AG04449 (cell line): ENCODE measurements at regions of chr3 and their contacts with region 1.

Region 1: DNA sequence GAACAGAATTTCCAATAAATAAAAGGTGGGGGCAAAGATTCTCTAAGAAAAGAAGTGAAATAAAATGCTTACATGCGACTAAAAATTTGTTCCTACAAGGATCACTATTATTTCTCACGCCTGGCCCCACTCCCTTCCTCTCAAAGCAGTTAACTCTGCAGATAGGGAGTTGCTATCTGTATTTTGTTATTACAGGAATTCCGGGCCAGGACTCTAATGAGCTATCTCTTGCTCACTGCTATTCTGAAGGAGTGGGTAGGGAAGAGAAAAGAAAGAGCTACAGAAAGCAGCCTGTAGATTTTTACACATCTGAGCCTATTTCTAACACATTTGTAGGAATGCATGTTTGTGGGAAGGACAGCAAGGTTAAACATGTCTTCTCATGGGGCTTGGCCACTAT is 140.4 kb downstream of the PCCB start:
- DNase-seq: no peak
- H3K4me3 ChIP-seq: no peak overlapping the region
- CTCF ChIP-seq: no peak

Region 2: GRCh38 chr3:136075218-136075808 is 315.3 kb before region 1 on chr3:
- CTCF ChIA-PET with region 1: interaction called, 14 read pairs
- POLR2A ChIA-PET with region 1: no interaction called
- DNase-seq: no peak
- H3K4me3 ChIP-seq: no peak overlapping the region
- CTCF ChIP-seq: peak; percentile 74

Region 3: GRCh38 chr3:136332776-136333175 is 57.8 kb before region 1 on chr3:
- CTCF ChIA-PET with region 1: interaction called, 10 read pairs
- POLR2A ChIA-PET with region 1: no interaction called
- DNase-seq: no peak
- H3K4me3 ChIP-seq: no peak overlapping the region
- CTCF ChIP-seq: no peak

Region 4: DNA sequence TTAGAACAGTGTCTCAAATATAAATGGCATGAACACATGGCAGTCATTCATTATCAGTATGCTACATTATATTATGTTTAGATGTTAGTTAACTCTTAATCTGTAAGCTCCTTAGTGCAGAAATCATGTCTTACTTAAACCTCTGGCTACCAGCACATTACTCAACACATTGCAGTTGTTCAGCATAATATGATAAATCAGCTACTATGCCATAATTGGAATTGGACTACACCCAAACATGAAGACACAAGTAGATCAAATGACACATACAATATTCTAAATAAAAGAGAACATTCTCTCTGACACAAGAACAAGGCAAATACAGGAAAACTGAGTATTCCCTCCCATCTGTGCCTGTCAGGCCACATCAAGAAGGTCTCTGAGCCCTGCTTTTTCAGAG is 24.3 kb before region 1 on chr3:
- CTCF ChIA-PET with region 1: interaction called, 22 read pairs
- POLR2A ChIA-PET with region 1: no interaction called
- DNase-seq: peak; percentile 26
- H3K4me3 ChIP-seq: no peak overlapping the region
- CTCF ChIP-seq: no peak

Region 5: DNA sequence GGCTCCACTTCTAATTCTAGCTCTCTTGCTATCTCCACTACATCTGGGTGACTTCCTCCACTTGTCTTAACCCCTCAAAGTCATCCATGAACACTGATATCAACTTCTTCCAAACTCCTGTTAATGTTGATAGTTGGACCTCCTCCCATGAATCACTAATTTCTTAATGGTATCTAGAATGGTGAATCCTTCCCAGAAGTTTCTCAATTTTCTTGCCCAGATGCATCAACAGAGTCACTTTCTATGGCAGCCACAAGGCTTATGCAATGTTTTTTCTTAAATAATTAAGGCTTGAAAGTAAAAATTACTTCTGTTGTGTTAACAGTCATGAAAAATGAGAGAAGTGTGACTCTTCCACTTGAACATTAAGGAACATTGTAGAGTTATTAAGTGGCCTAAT is 23.9 kb after region 1 on chr3:
- CTCF ChIA-PET with region 1: interaction called, 16 read pairs
- POLR2A ChIA-PET with region 1: no interaction called
- DNase-seq: no peak
- H3K4me3 ChIP-seq: no peak overlapping the region
- CTCF ChIP-seq: no peak